Caco-2 (cell line): ENCODE measurements at regions of chr5 and their contacts with region 1.

Region 1: DNA sequence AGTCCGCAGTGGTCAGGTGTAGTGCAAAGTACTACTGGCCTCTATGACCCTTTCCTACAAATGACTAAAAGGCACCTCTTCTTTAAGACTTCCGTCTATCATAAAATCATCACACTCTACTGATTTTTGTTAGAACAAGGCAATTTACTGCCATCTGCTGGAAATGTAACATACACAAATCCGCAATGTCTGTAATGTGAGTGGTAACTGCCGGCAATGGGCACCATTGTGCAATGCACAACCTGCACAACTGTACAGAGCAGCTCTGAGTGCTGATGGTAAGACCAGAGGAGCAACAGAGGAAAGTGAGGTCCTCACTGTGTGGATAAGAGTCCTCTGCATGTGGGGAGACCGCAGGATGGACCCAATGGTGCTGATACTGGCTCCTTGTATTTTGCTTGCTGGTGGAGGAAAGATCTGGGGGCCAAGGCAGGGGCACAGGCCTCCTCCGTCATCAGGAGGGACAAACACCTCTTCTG is 103.7 kb downstream of the ATPSCKMT start:
- DNase-seq: peak in 1 of 2 experiments; percentile 62
- H3K4me3 ChIP-seq: no peak overlapping the region
- H3K4me3 Mint-ChIP-seq: no peak overlapping the region
- H3K27ac Mint-ChIP-seq: peak overlapping the region; percentile 49
- H3K4me1 ChIP-seq: no peaks in the 10 kb centered on the region; the same call in 1 of the 2 replicates
- H3K4me1 Mint-ChIP-seq: peaks cover 17% of the 10 kb centered on the region
- H3K27me3 ChIP-seq: no peaks in the 10 kb centered on the region
- H3K27me3 Mint-ChIP-seq: no peaks in the 10 kb centered on the region
- CTCF ChIP-seq: peak; percentile 38 to 41

Region 2: DNA sequence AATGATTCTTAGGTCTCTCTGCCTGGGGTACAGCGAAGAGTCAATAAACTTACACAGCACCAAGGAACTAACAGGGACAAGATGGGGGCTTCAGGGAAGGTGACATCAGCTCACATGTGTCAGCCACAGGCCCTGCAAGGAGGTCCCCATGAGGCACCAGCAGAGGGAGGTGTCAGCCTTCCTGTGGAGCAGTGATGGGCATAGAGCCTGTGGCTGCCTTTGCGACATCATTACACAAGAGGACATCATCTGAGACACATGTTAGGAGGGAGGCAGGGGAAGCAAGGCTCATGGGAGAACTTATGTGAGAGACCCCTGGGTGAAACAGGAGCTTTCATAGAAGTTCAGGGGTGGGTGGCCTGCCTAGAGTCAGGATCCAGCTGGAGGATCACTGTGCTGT is 989.7 kb before region 1 on chr5:
- CTCF ChIA-PET with region 1: no interaction called
- POLR2A ChIA-PET with region 1: no interaction called
- intact Hi-C with region 1: loop called (anchors 5 kb)
- DNase-seq: peak; percentile 69 to 73
- H3K4me3 ChIP-seq: no peak overlapping the region
- H3K4me3 Mint-ChIP-seq: no peak overlapping the region
- H3K27ac Mint-ChIP-seq: no peak overlapping the region
- H3K4me1 ChIP-seq: peaks cover 13% of the 10 kb centered on the region
- H3K4me1 Mint-ChIP-seq: peaks cover 16% of the 10 kb centered on the region
- H3K27me3 ChIP-seq: no peaks in the 10 kb centered on the region
- H3K27me3 Mint-ChIP-seq: no peaks in the 10 kb centered on the region
- CTCF ChIP-seq: peak; percentile 64 to 84

Region 3: GRCh38 chr5:9544502-9545135 is 601.3 kb before region 1 on chr5:
- CTCF ChIA-PET with region 1: no interaction called
- POLR2A ChIA-PET with region 1: no interaction called
- intact Hi-C with region 1: loop called (anchors 5 kb)
- DNase-seq: peak; percentile 82 to 93
- H3K4me3 ChIP-seq: peak overlapping the region; percentile 94
- H3K4me3 Mint-ChIP-seq: peak overlapping the region; percentile 96
- H3K27ac Mint-ChIP-seq: peak overlapping the region; percentile 56
- H3K4me1 ChIP-seq: no peaks in the 10 kb centered on the region
- H3K4me1 Mint-ChIP-seq: peaks cover 6% of the 10 kb centered on the region
- H3K27me3 ChIP-seq: no peaks in the 10 kb centered on the region
- H3K27me3 Mint-ChIP-seq: no peaks in the 10 kb centered on the region
- CTCF ChIP-seq: peak; percentile 90 to 94

Region 4: DNA sequence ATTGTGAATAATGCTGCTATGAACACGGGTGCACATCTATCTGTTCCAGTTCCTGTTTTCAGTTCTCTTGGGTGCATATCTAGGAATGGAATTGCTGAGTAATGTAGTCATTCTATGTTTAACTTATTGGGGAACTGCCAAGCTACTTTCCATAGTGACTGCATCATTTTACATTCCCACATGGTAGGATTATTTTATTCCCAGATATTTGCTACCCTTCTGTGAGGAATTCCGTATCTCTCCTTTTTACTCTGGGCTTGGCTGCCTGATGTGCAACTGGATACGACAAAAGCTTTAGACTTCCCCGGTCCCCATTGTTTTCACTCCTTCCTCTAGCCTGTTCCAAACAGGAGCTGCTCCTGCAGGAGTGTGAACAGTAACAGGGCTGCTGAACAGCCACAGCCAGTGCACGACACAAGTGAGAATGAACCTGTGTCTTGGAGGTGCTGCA is 523.0 kb before region 1 on chr5:
- CTCF ChIA-PET with region 1: no interaction called
- POLR2A ChIA-PET with region 1: no interaction called
- intact Hi-C with region 1: loop called (anchors 10 kb)
- DNase-seq: no peak
- H3K4me3 ChIP-seq: no peak overlapping the region
- H3K4me3 Mint-ChIP-seq: peak overlapping the region; percentile 7
- H3K27ac Mint-ChIP-seq: peak overlapping the region; percentile 90
- H3K4me1 ChIP-seq: peaks cover 51% of the 10 kb centered on the region
- H3K4me1 Mint-ChIP-seq: peaks cover 57% of the 10 kb centered on the region
- H3K27me3 ChIP-seq: no peaks in the 10 kb centered on the region
- H3K27me3 Mint-ChIP-seq: no peaks in the 10 kb centered on the region
- CTCF ChIP-seq: no peak

Region 5: DNA sequence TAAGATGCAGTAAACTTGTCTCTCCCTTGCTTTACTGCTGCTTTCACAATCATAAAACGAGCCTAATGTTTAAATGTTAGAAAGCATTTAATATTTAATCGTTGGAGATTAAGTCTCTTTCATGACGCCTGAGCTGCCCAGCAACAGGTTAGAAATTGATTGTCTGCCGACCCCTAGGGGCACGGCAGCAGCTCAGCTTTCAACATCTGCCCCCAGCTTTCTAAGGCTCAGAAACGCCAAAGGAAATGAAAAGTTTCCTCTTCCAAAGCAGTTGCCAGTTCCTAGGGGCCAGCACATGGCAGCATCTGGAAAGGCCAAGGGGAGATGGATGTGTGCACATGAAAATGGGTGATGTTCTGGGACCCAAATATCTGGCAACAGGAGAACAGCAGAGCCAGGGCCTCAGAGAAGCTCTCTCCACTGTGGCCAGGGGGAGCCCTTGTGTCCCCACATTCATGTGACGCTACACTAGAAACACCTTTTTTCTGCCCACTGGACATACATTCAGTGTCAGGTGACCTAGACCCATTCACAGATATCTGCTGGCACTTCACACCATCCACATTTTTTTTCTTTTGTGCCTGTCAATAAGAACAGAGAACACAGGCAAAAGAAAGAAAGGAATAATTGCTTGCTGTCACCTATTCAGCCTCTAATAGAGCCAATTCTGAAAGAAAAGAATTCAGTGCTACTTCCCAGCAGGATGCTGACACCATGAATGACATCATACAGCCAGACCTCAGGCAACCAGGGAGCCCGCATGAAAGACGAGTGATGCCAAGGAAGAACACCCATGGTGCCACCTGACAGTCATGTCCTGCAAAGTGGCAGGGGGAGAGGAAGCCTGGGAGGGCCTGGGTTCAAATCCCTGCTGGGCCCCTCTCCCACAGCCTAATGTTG is 310.8 kb before region 1 on chr5:
- CTCF ChIA-PET with region 1: no interaction called
- POLR2A ChIA-PET with region 1: no interaction called
- intact Hi-C with region 1: loop called (anchors 5 kb)
- DNase-seq: no peak
- H3K4me3 ChIP-seq: no peak overlapping the region
- H3K4me3 Mint-ChIP-seq: no peak overlapping the region
- H3K27ac Mint-ChIP-seq: no peak overlapping the region
- H3K4me1 ChIP-seq: peaks cover 40% of the 10 kb centered on the region
- H3K4me1 Mint-ChIP-seq: peaks cover 32% of the 10 kb centered on the region
- H3K27me3 ChIP-seq: no peaks in the 10 kb centered on the region
- H3K27me3 Mint-ChIP-seq: no peaks in the 10 kb centered on the region
- CTCF ChIP-seq: no peak

Region 6: DNA sequence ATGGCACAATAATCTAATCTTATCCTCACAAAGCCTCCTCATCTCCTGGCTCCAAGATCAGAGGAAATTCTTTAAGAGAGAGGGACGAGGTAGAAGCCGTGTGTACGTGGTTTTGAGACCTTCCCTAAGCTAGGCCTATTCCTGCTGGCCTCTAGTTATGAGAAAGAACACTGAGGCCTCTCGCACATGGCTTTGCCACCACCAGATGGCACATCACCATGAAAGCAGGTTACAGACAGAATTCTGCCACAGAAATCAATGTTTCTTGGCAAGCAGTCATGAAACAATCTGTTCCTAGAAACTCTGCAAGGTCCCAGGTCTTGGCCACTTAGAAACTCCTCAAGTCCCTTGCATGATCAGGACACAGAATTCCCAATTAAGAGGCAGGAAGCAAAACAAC is 247.6 kb before region 1 on chr5:
- CTCF ChIA-PET with region 1: no interaction called
- POLR2A ChIA-PET with region 1: no interaction called
- intact Hi-C with region 1: loop called (anchors 1 kb)
- DNase-seq: peak in 1 of 2 experiments; percentile 49
- H3K4me3 ChIP-seq: no peak overlapping the region
- H3K4me3 Mint-ChIP-seq: no peak overlapping the region
- H3K27ac Mint-ChIP-seq: no peak overlapping the region
- H3K4me1 ChIP-seq: no peaks in the 10 kb centered on the region
- H3K4me1 Mint-ChIP-seq: no peaks in the 10 kb centered on the region
- H3K27me3 ChIP-seq: no peaks in the 10 kb centered on the region
- H3K27me3 Mint-ChIP-seq: no peaks in the 10 kb centered on the region
- CTCF ChIP-seq: peak; percentile 55 to 76

Region 7: GRCh38 chr5:10157085-10157669 is 11.2 kb after region 1 on chr5:
- CTCF ChIA-PET with region 1: no interaction called
- POLR2A ChIA-PET with region 1: no interaction called
- intact Hi-C with region 1: no loop called
- DNase-seq: peak; percentile 79 to 85
- H3K4me3 ChIP-seq: no peak overlapping the region
- H3K4me3 Mint-ChIP-seq: peak overlapping the region; percentile 62
- H3K27ac Mint-ChIP-seq: peak overlapping the region; percentile 67
- H3K4me1 ChIP-seq: peaks cover 59% of the 10 kb centered on the region
- H3K4me1 Mint-ChIP-seq: peaks cover 39% of the 10 kb centered on the region
- H3K27me3 ChIP-seq: no peaks in the 10 kb centered on the region
- H3K27me3 Mint-ChIP-seq: no peaks in the 10 kb centered on the region
- CTCF ChIP-seq: no peak

Region 8: GRCh38 chr5:10220243-10220642 is 74.3 kb after region 1 on chr5:
- CTCF ChIA-PET with region 1: no interaction called
- POLR2A ChIA-PET with region 1: no interaction called
- intact Hi-C with region 1: loop called (anchors 2 kb)
- DNase-seq: peak in 1 of 2 experiments; percentile 38
- H3K4me3 ChIP-seq: no peak overlapping the region
- H3K4me3 Mint-ChIP-seq: no peak overlapping the region
- H3K27ac Mint-ChIP-seq: no peak overlapping the region
- H3K4me1 ChIP-seq: peaks cover 15% of the 10 kb centered on the region
- H3K4me1 Mint-ChIP-seq: peaks cover 15% of the 10 kb centered on the region
- H3K27me3 ChIP-seq: no peaks in the 10 kb centered on the region
- H3K27me3 Mint-ChIP-seq: no peaks in the 10 kb centered on the region
- CTCF ChIP-seq: peak in 1 of 2 experiments; percentile 43

Region 9: GRCh38 chr5:10552183-10553143 is 406.5 kb after region 1 on chr5:
- CTCF ChIA-PET with region 1: no interaction called
- POLR2A ChIA-PET with region 1: no interaction called
- intact Hi-C with region 1: no loop called
- DNase-seq: no peak
- H3K4me3 ChIP-seq: no peak overlapping the region
- H3K4me3 Mint-ChIP-seq: peak overlapping the region; percentile 56
- H3K27ac Mint-ChIP-seq: peak overlapping the region; percentile 97
- H3K4me1 ChIP-seq: peaks cover 56% of the 10 kb centered on the region
- H3K4me1 Mint-ChIP-seq: peaks cover 57% of the 10 kb centered on the region
- H3K27me3 ChIP-seq: no peaks in the 10 kb centered on the region
- H3K27me3 Mint-ChIP-seq: no peaks in the 10 kb centered on the region
- CTCF ChIP-seq: no peak